Activated T-helper 2 cell treated with anti-CD3 and anti-CD28 coated beads, Interferon-gamma antibody, Interleukin-2, Interleukin-4, amounts not matched to agents 10 μg/mL and 5 μg/mL and 100 μg/mL, durations not matched to agents 14 hours and 24 hours and 36 hours (primary cell): ENCODE measurements at regions of chr17 and their contacts with region 1.

Region 1: DNA sequence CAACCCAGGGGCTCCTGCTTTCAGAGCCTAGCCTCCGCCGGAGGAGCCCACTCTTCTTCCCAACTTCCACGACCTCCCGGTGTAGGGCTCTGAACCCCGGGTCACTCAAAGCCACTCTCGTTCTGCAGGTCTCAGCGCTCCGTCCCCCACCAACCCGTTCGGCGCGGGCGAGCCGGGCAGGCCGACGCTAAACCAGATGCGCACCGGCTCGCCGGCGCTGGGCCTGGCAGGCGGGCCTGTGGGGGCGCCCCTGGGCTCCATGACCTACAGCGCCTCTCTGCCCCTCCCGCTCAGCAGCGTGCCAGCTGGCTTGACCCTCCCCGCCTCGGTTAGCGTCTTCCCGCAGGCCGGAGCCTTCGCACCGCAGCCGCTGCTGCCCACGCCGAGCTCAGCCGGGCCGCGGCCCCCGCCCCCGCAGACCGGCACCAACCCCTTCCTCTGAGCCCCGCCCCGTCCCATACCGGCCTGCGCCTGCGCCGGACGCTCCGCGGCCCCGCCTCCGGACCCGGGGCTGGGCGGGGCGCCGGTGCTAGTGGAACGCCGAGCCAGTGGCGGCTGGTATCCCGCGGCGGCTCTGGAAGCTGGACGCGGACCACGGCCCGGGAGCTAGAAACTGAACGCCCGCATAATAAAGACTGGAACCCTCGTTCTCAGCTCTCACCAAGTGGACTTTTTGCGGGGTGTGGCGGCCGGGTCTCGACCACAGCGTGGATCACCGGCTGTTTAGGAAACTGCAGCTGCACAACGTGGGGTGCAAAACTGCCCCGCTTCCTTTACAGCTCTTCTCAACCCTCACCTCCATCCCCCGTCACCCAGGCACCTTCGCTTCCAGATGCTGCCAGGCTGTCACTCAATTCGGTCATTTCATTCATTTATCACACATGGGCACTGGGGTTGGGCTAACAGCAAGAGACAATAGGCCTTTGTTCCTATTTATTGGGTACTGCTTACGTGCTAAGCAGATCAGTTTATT is 5.0 kb upstream of the SPATA20 start:
- DNase-seq: peak; percentile 83
- H3K4me3 Mint-ChIP-seq: peak overlapping the region; percentile 80
- H3K27ac Mint-ChIP-seq: peak overlapping the region; percentile 6
- H3K4me1 Mint-ChIP-seq: peaks cover 12% of the 10 kb centered on the region
- H3K27me3 Mint-ChIP-seq: peaks cover 18% of the 10 kb centered on the region

Region 2: GRCh38 chr17:50507871-50508572 is 34.0 kb before region 1 on chr17 and contains the start of gene MYCBPAP:
- intact Hi-C with region 1: loop called (anchors 2 kb)
- DNase-seq: peak; percentile 79
- H3K4me3 Mint-ChIP-seq: peak within 1 kb of the TSS; percentile 90
- H3K27ac Mint-ChIP-seq: peak within 1 kb of the TSS; percentile 90
- H3K4me1 Mint-ChIP-seq: peaks cover 49% of the 10 kb centered on the region
- H3K27me3 Mint-ChIP-seq: no peaks in the 10 kb centered on the region
- total RNA-seq, gene MYCBPAP: 3.1 and 4.4 TPM in 2 replicates